ENCODE measurements at regions of chr10 and their contacts with region 1.

Region 1: DNA sequence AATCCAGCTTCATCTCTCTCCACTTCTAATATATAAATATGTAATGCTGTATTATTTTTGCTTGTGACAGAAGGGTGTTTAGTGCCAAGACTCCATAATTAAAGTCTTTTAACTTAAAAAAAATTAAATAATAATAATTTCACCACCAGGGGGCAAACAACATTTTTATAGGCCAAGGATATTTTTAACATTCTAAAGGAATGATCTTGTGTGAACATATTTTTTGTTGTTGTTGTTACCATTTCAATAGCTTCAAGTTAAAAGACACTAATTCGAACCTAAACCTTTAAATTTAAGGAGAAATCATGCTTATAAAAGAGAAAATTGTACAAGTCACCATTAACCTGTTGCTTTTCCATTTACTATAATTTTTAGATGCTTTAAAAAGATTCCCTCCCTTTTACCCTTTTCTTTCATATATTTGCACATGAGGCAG is 7.5 kb upstream of the DNAJC1 start:
- DNase-seq: no peak
- H3K4me3 Mint-ChIP-seq: no peak overlapping the region
- H3K27ac Mint-ChIP-seq: no peak overlapping the region
- H3K4me1 Mint-ChIP-seq: no peaks in the 10 kb centered on the region
- H3K27me3 Mint-ChIP-seq: peaks cover 4% of the 10 kb centered on the region

Region 2: GRCh38 chr10:21926949-21927348 is 84.0 kb before region 1 on chr10:
- CTCF ChIA-PET with region 1: no interaction called
- POLR2A ChIA-PET with region 1: no interaction called
- intact Hi-C with region 1: no loop called
- DNase-seq: no peak
- H3K4me3 Mint-ChIP-seq: no peak overlapping the region
- H3K27ac Mint-ChIP-seq: no peak overlapping the region
- H3K4me1 Mint-ChIP-seq: no peaks in the 10 kb centered on the region
- H3K27me3 Mint-ChIP-seq: no peaks in the 10 kb centered on the region

Region 3: DNA sequence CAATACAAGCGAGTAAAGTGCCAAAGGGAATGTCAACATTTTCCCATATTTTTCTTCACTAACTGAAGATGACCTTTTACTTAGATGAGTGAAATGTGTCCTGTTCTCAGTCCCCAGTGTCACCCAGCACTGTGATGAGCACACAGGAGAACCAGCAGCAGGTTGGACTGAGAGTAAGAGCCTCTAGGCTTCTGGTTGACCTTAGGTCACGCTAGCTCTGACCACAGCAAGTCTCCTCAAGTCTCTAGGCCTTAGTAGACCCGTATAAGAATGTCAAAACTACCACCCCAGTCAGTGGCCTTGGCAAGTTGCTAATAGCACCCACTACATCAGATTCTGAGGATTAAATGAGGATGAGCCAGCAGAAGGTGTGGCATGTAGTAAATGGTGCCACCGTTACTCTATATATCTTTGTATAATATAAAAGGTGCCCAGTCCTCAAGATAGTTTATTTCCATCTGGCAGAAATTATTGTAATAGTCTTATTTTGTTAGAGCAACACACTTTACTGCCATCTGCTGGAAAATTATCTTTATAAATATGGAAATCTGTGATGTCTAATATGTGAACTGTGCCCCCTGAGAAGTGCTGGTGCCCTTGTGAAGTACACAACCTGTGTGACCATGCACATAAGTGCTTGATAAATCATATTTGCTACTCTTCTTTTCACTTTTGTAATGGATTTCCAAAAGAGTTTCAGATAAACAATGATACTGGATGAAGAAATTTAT is 410.0 kb after region 1 on chr10:
- CTCF ChIA-PET with region 1: interaction called, 3 read pairs
- POLR2A ChIA-PET with region 1: no interaction called
- intact Hi-C with region 1: loop called (anchors 2 kb)
- DNase-seq: no peak
- H3K4me3 Mint-ChIP-seq: no peak overlapping the region
- H3K27ac Mint-ChIP-seq: no peak overlapping the region
- H3K4me1 Mint-ChIP-seq: no peaks in the 10 kb centered on the region
- H3K27me3 Mint-ChIP-seq: peaks cover 1% of the 10 kb centered on the region